ENCODE measurements at regions of chrX and their contacts with region 1.

Region 1: GRCh38 chrX:31213941-31214340 is 142.1 kb upstream of the FTHL17 start:
- DNase-seq: peak; percentile 27
- H3K4me3 ChIP-seq: no peak overlapping the region
- H3K27ac ChIP-seq: no peak overlapping the region
- H3K4me1 ChIP-seq: no peaks in the 10 kb centered on the region
- H3K27me3 ChIP-seq: no peaks in the 10 kb centered on the region
- CTCF ChIP-seq: peak; percentile 62

Region 2: GRCh38 chrX:31423609-31424189 is 209.8 kb after region 1 on chrX:
- CTCF ChIA-PET with region 1: interaction called, 3 read pairs
- POLR2A ChIA-PET with region 1: no interaction called
- intact Hi-C with region 1: loop called (anchors 1 kb)
- DNase-seq: peak; percentile 79
- H3K4me3 ChIP-seq: no peak overlapping the region
- H3K27ac ChIP-seq: no peak overlapping the region
- H3K4me1 ChIP-seq: no peaks in the 10 kb centered on the region
- H3K27me3 ChIP-seq: no peaks in the 10 kb centered on the region
- CTCF ChIP-seq: peak; percentile 64

Measured in A673 (cell line).